MCF 10A (cell line): ENCODE measurements at regions of chr6 and their contacts with region 1.

Region 1: GRCh38 chr6:108896111-108896661 is 48.0 kb downstream of the ARMC2 start:
- DNase-seq: peak; percentile 88
- H3K4me3 Mint-ChIP-seq: peak overlapping the region; percentile 40
- H3K27ac Mint-ChIP-seq: peak overlapping the region; percentile 97
- H3K4me1 Mint-ChIP-seq: peaks cover 29% of the 10 kb centered on the region
- H3K27me3 Mint-ChIP-seq: no peaks in the 10 kb centered on the region
- CTCF ChIP-seq: no peak

Region 2: DNA sequence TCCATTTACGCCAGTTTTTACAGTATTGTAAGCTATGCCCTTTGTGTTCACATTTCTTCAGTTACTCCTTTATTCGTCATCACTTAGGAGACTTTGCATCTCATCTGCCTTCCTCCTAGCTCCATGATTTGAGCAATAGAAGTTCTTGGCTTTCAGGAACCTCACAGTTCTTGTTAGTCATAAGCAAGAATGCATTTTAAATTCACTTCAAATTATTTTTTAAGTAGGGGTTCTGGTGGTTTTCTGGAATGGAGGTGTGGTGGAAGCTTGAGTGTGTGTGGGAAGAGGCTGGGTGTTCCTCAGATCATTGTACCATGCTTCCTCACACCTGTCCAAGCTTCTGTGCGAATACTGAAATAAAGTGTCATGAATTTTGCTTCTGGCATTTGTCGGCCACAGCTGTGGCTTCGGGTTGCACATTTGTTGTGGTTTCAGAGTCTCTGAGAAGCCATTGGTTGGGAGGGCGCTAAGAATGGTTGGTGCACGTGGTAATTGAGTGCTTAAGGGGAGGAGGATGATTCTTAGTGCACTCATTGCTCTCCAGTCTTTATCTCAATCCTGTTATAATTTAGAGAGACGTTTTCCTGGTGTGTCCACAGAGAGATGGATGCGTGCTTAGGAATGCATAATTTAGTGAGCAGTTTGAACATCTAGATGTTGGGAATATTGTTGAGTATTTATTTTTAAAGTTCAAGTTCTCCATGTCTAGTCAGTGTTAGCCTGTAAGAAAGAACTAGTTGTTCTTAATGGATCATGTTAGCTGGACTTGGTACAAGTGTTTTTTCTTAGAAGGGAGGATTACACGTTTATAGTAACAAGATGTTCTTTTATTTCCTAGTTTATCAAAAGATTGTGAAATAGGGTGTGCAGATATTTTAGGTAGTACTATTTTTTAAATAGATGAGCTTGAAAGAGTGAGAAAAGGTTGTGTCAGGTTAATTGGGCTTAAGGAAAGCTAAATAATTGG is 303.5 kb before region 1 on chr6:
- CTCF ChIA-PET with region 1: interaction called, 3 read pairs
- POLR2A ChIA-PET with region 1: interaction called, 10 read pairs
- intact Hi-C with region 1: no loop called
- DNase-seq: peak; percentile 77
- H3K4me3 Mint-ChIP-seq: peak overlapping the region; percentile 39
- H3K27ac Mint-ChIP-seq: peak overlapping the region; percentile 87
- H3K4me1 Mint-ChIP-seq: peaks cover 69% of the 10 kb centered on the region
- H3K27me3 Mint-ChIP-seq: no peaks in the 10 kb centered on the region
- CTCF ChIP-seq: no peak

Region 3: GRCh38 chr6:108782179-108783041 is 113.8 kb before region 1 on chr6:
- CTCF ChIA-PET with region 1: interaction called, 3 read pairs
- POLR2A ChIA-PET with region 1: interaction called, 4 read pairs
- intact Hi-C with region 1: loop called (anchors 1 kb)
- DNase-seq: peak; percentile 92
- H3K4me3 Mint-ChIP-seq: peak overlapping the region; percentile 62
- H3K27ac Mint-ChIP-seq: peak overlapping the region; percentile 83
- H3K4me1 Mint-ChIP-seq: peaks cover 18% of the 10 kb centered on the region
- H3K27me3 Mint-ChIP-seq: no peaks in the 10 kb centered on the region
- CTCF ChIP-seq: peak; percentile 70

Region 4: GRCh38 chr6:108848116-108848868 is 47.9 kb before region 1 on chr6 and contains the start of gene ARMC2:
- CTCF ChIA-PET with region 1: interaction called, 7 read pairs
- POLR2A ChIA-PET with region 1: interaction called, 3 read pairs
- intact Hi-C with region 1: loop called (anchors 1 kb)
- DNase-seq: peak; percentile 89
- H3K4me3 Mint-ChIP-seq: peak within 1 kb of the TSS; percentile 83
- H3K27ac Mint-ChIP-seq: peak within 1 kb of the TSS; percentile 87
- H3K4me1 Mint-ChIP-seq: peaks cover 5% of the 10 kb centered on the region
- H3K27me3 Mint-ChIP-seq: no peaks in the 10 kb centered on the region
- CTCF ChIP-seq: no peak
- total RNA-seq, gene ARMC2: 1.6 and 3.2 TPM in 2 replicates

Region 5: GRCh38 chr6:109059571-109060021 is 163.4 kb after region 1 on chr6:
- CTCF ChIA-PET with region 1: interaction called, 9 read pairs
- POLR2A ChIA-PET with region 1: interaction called, 14 read pairs
- intact Hi-C with region 1: loop called (anchors 1 kb)
- DNase-seq: peak; percentile 71
- H3K4me3 Mint-ChIP-seq: peak overlapping the region; percentile 61
- H3K27ac Mint-ChIP-seq: peak overlapping the region; percentile 96
- H3K4me1 Mint-ChIP-seq: peaks cover 52% of the 10 kb centered on the region
- H3K27me3 Mint-ChIP-seq: no peaks in the 10 kb centered on the region
- CTCF ChIP-seq: peak; percentile 56